GM13977 (cell line): ENCODE measurements at regions of chr12 and their contacts with region 1.

Region 1: DNA sequence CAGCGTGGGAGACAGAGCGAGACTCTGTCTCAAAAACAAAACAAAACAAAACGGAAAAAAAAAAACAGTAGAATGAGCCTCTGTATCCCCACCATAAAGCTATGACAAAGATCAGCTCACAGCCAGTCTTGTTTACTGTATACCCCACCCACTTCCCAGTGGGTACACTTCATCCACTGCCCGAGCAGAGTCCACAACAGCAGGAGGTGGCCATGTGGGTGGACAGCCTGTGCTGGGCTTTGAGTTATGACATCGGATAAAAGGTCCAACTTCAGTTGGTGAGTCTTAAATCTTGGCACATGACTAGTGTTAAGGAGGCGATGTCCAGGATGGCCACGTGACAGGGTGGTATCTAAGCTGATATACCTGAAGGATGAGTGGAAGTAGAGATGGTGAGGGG is 34.8 kb upstream of the MAPKAPK5 start:
- DNase-seq: no peak
- CTCF ChIP-seq: no peak

Region 2: DNA sequence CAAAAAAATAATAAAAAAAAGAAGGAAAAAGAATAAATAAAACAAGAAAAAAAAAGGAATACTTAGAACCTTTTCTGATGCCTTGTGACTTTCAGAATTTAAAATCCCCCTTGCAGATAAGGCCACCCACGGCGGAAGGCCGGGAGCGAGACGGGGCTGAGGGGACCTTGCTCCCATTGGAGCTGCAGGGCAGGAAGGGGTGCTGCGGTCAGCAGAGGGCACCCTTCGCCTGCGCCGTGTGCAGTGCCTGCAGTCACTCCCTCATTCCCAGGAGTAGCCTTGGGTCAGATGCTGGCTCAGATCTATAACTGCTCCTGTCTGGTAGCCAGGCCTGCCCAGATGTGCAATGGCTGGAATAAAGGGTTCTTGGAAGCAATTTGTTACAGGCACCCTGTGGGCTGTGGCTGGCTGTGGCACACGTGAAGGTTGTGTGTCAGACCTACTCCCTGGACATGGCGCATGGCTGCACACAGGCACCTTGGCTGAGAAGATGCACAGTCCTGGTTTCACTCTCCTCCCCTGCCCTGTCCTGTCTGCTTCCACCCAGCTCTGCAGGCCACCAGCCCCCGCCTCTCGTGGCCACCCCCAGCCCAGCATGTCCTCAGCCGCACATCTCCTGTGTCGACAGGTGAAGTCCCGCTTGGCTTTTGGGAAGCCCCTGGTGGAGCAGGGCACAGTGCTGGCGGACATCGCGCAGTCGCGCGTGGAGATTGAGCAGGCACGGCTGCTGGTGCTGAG is 53.9 kb before region 1 on chr12:
- in situ Hi-C with region 1: loop called (anchors 10 kb)
- DNase-seq: peak; percentile 71
- CTCF ChIP-seq: peak; percentile 70